ENCODE measurements at regions of chr11 and their contacts with region 1.

Region 1: DNA sequence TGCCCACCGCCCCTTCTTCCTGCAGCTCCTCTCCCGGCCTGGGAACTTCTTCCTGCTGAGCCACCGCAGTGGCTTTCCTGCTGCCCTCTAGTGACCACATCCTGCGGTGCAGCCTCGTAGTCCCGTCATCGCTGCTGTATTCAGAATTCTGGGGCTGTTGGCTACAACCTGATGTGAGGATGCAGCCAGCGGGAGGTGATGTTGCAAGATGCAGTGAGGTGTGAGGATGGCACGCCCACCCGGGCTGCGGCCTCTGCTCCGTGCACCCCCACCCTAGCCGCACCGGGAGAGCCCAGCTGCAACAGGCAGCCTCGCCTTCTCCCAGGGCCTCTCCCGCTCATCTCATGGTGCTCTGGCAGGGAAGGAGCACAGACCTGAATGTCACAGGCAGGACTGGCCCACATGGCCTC is 10.1 kb downstream of the CHST1 start:
- DNase-seq: peak; percentile 75 to 98
- H3K4me3 ChIP-seq: no peak overlapping the region
- H3K27ac ChIP-seq: no peak overlapping the region
- H3K4me1 ChIP-seq: peaks cover 3 to 21% (median 11%) of the 10 kb centered on the region in 4 experiments
- H3K27me3 ChIP-seq: no peaks in the 10 kb centered on the region; a peak in 1 of 7 replicates
- CTCF ChIP-seq: peak; percentile 92 to 98 (median 97)
- EP300 ChIP-seq: peak; percentile 12 to 25; a peak in 1 of 3 replicates
- POLR2A ChIP-seq: no peak
- RAD21 ChIP-seq: peak; percentile 88 to 93

Region 2: GRCh38 chr11:45405916-45406670 is 249.3 kb before region 1 on chr11:
- CTCF ChIA-PET with region 1: interaction called, 13 read pairs
- POLR2A ChIA-PET with region 1: no interaction called
- DNase-seq: no peak
- H3K4me3 ChIP-seq: no peak overlapping the region
- H3K27ac ChIP-seq: no peak overlapping the region
- H3K4me1 ChIP-seq: peaks cover 11 to 20% (median 13%) of the 10 kb centered on the region in 4 experiments
- H3K27me3 ChIP-seq: no peaks in the 10 kb centered on the region; a peak in 1 of 7 replicates
- CTCF ChIP-seq: peak in 2 of 3 experiments; percentile 12 to 41; a peak in 2 of 4 replicates
- EP300 ChIP-seq: no peak
- POLR2A ChIP-seq: no peak
- RAD21 ChIP-seq: peak in 1 of 2 experiments; percentile 36; a peak in 3 of 4 replicates

Region 3: GRCh38 chr11:45638051-45638450 is 17.3 kb before region 1 on chr11:
- CTCF ChIA-PET with region 1: interaction called, 40 read pairs
- POLR2A ChIA-PET with region 1: no interaction called
- DNase-seq: no peak
- H3K4me3 ChIP-seq: no peak overlapping the region
- H3K27ac ChIP-seq: no peak overlapping the region
- H3K4me1 ChIP-seq: no peaks in the 10 kb centered on the region
- H3K27me3 ChIP-seq: no peaks in the 10 kb centered on the region
- CTCF ChIP-seq: no peak
- EP300 ChIP-seq: no peak
- POLR2A ChIP-seq: no peak
- RAD21 ChIP-seq: no peak

Region 4: GRCh38 chr11:45665206-45665932 is 10.0 kb after region 1 on chr11 and contains the start of gene CHST1:
- CTCF ChIA-PET with region 1: interaction called, 48 read pairs
- POLR2A ChIA-PET with region 1: interaction called, 8 read pairs
- DNase-seq: peak in 1 of 2 experiments; percentile 64
- H3K4me3 ChIP-seq: peak within 1 kb of the TSS; percentile 52 to 78 (median 54)
- H3K27ac ChIP-seq: no peak within 1 kb of the TSS; the same call in 1 of the 2 replicates
- H3K4me1 ChIP-seq: peaks cover 0 to 17% (median 12%) of the 10 kb centered on the region in 4 experiments; a peak in 6 of 7 replicates
- H3K27me3 ChIP-seq: peaks cover 11 to 46% (median 37%) of the 10 kb centered on the region in 4 experiments
- CTCF ChIP-seq: no peak
- EP300 ChIP-seq: no peak
- POLR2A ChIP-seq: no peak
- RAD21 ChIP-seq: no peak
- total RNA-seq, gene CHST1: 1.6 and 3.8 TPM in 2 replicates

Region 5: DNA sequence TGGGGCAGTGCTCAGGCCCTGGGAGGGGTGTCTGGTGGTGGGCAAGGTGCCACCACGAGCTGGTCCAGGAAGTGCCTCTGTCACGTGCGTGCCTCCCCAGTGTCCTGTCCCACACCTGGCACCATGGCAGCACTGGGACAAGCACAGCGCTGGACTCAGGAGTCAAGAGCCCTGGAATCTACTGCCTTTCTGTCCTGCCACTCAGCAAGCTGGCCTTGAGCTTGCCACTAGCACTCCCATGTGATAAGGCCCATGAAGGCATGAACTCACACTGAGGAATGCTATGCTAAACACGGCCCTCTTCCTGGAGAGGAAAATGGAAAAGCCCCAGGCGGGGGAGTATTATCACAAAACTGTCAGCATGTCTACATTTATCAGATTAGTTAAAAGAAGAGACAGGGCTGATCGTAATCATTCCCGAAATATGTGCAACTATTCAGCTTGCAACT is 98.9 kb after region 1 on chr11:
- CTCF ChIA-PET with region 1: interaction called, 11 read pairs
- POLR2A ChIA-PET with region 1: no interaction called
- DNase-seq: no peak
- H3K4me3 ChIP-seq: no peak overlapping the region
- H3K27ac ChIP-seq: no peak overlapping the region
- H3K4me1 ChIP-seq: peaks cover 0 to 6% (median under 1%) of the 10 kb centered on the region in 4 experiments; a peak in 5 of 7 replicates
- H3K27me3 ChIP-seq: no peaks in the 10 kb centered on the region; a peak in 1 of 7 replicates
- CTCF ChIP-seq: no peak
- EP300 ChIP-seq: no peak
- POLR2A ChIP-seq: no peak
- RAD21 ChIP-seq: no peak

Measured in H1 (cell line).